A673 (cell line): ENCODE measurements at regions of chr5 and their contacts with region 1.

Region 1: DNA sequence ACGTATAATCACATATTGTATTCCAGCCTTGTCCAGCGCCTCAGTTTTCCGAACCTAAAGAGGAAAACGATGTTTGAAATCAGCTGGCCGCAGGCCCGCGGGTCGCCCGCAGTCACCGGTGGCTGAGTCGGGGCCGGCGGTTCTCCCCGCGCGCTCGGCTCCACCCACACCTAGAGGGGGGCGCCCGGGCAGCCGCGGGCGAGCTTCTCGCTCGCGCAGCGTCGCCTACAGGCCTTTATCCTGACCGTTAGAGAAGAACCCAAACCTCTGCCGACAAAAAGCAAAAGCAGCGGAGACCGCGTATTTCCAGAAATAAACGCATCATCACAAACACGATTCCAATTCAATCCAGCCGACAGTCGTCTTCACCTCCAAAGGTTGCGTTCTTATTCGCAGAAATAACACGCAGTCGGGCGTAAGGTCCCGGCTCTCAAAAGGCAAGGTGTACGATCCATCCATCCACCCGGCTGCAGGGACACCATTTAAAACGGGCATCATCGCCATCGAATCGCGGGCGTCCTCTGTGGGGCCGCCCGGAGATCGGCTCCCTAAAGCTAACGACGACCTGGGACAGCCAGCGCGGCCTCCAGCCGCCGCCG is 680 bp upstream of the NIPBL start:
- DNase-seq: peak; percentile 88
- H3K4me3 ChIP-seq: peak overlapping the region; percentile 92
- H3K27ac ChIP-seq: peak overlapping the region; percentile 95
- H3K4me1 ChIP-seq: peaks cover 37% of the 10 kb centered on the region
- H3K27me3 ChIP-seq: no peaks in the 10 kb centered on the region
- CTCF ChIP-seq: peak; percentile 58

Region 2: GRCh38 chr5:36151434-36152323 is 724.2 kb before region 1 on chr5 and contains the starts of genes LMBRD2 and SKP2:
- CTCF ChIA-PET with region 1: no interaction called
- POLR2A ChIA-PET with region 1: no interaction called
- intact Hi-C with region 1: loop called (anchors 10 kb)
- DNase-seq: peak; percentile 100
- H3K4me3 ChIP-seq: peak within 1 kb of the TSS; percentile 91
- H3K27ac ChIP-seq: peak within 1 kb of the TSS; percentile 81
- H3K4me1 ChIP-seq: peaks cover 29% of the 10 kb centered on the region
- H3K27me3 ChIP-seq: no peaks in the 10 kb centered on the region
- CTCF ChIP-seq: no peak
- total RNA-seq, gene LMBRD2: 6.4 and 8.4 TPM in 2 replicates
- total RNA-seq, gene SKP2: 133 and 154 TPM in 2 replicates

Region 3: GRCh38 chr5:36836831-36837230 is 39.1 kb before region 1 on chr5:
- CTCF ChIA-PET with region 1: no interaction called
- POLR2A ChIA-PET with region 1: no interaction called
- intact Hi-C with region 1: no loop called
- DNase-seq: no peak
- H3K4me3 ChIP-seq: no peak overlapping the region
- H3K27ac ChIP-seq: no peak overlapping the region
- H3K4me1 ChIP-seq: no peaks in the 10 kb centered on the region
- H3K27me3 ChIP-seq: no peaks in the 10 kb centered on the region
- CTCF ChIP-seq: no peak

Region 4: GRCh38 chr5:36944607-36945225 is 68.8 kb after region 1 on chr5:
- CTCF ChIA-PET with region 1: no interaction called
- POLR2A ChIA-PET with region 1: no interaction called
- intact Hi-C with region 1: loop called (anchors 5 kb)
- DNase-seq: peak; percentile 80
- H3K4me3 ChIP-seq: no peak overlapping the region
- H3K27ac ChIP-seq: no peak overlapping the region
- H3K4me1 ChIP-seq: peaks cover 25% of the 10 kb centered on the region
- H3K27me3 ChIP-seq: no peaks in the 10 kb centered on the region
- CTCF ChIP-seq: peak; percentile 72